ENCODE measurements at regions of chr10 and their contacts with region 1.

Region 1: GRCh38 chr10:31479752-31480151 is 160.7 kb downstream of the ZEB1 start:
- DNase-seq: no peak
- ATAC-seq: no peak
- H3K4me3 ChIP-seq: no peak overlapping the region
- H3K27ac ChIP-seq: no peak overlapping the region
- H3K4me1 ChIP-seq: peaks cover 0 to 7% (median 0%) of the 10 kb centered on the region in 12 donors
- H3K27me3 ChIP-seq: no peaks in the 10 kb centered on the region
- CTCF ChIP-seq: no peak
- POLR2A ChIP-seq: no peak

Region 2: GRCh38 chr10:30775779-30776591 is 703.8 kb before region 1 on chr10:
- intact Hi-C with region 1: loop called in 1 of 10 experiments (anchors 10 kb)
- DNase-seq: no peak
- ATAC-seq: peak; percentile 60 to 87 (median 79)
- H3K4me3 ChIP-seq: no peak overlapping the region
- H3K27ac ChIP-seq: peak overlapping the region in 3 of 12 donors; percentile 4 to 74 (median 37)
- H3K4me1 ChIP-seq: peaks cover 0 to 6% (median 0%) of the 10 kb centered on the region in 12 donors
- H3K27me3 ChIP-seq: no peaks in the 10 kb centered on the region
- CTCF ChIP-seq: no peak
- POLR2A ChIP-seq: no peak